Left ventricle myocardium inferior (tissue), 1 donor: ENCODE measurements at regions of chr12 and their contacts with region 1.

Region 1: DNA sequence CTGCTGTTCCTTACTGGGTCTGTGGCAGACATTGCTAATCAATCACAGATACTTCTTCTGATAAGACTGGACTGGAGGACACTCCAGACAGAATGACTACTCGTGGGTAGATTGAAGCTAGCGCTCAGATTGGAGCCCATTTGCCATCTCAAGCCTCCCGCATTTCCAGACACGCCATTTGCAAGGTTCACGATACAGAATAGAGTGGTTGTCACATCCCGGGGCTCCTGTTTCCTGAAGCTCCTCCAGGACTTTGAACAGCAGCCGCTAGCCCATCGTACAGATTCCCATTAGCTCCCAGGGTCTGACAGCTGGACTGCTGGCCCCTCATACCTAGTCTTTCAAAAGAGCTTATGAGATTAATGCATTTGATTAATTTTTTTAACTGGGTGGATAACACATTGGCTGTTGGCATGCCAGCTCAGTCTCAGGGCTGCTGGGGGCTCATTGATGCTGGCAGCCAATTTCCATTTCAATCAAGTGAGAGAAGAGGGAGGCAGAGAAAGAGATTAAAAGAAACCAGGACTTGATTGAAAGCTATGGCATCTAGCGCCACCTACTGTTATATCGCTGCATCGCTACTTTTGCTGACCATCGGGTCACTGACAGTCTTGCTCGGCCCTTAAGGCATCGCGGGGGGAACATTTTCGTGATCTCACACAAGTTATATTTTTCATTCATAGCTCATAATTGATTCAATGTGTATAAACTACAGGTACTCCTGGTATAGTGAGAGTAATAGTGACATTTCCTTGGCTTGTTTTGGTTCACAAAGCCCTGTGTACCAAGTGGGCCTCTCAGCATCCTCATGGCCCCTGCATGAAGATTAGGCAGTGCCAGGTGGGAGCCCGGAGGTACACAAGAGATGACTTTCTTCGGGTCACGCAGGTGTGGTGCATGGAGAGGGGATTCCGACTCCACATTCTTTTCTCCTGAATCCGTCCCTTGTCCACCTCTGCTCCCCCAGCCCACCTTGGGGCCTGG is 78.6 kb downstream of the CCDC60 start:
- DNase-seq: peak; percentile 50
- H3K4me3 ChIP-seq: no peak overlapping the region
- H3K27ac ChIP-seq: no peak overlapping the region
- H3K4me1 ChIP-seq: peaks cover 25% of the 10 kb centered on the region
- H3K27me3 ChIP-seq: no peaks in the 10 kb centered on the region
- CTCF ChIP-seq: peak; percentile 92

Region 2: DNA sequence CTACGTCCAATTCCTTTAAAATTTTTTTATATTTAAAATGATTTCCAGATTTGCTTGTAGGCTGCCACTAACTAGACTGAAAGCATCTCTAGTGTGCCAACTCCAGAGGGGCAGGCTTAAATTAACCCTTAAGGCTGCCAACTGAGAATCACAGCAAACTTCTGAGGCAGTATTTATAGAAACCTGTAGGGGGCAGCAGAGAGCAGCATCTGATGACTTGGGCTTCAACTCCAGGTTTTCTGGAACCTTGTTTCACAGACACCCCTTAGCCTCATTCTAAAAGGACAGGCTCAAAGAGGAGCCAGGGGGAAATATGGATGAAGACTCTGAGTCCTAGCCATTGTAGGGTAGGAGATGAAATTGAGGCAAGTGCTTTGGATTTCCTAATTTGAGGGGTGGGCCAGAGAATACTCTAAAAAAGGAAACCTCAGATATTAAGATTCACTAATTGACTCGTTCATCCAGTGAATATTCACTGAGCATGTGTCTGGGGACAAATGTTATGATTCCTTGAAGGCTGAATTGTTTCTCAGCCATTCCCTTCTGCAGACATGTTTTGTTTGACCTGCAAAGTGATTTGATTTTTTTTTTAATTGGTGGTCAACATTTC is 297.7 kb before region 1 on chr12:
- intact Hi-C with region 1: loop called (anchors 5 kb)
- DNase-seq: no peak
- H3K4me3 ChIP-seq: no peak overlapping the region
- H3K27ac ChIP-seq: no peak overlapping the region
- H3K4me1 ChIP-seq: peaks cover 4% of the 10 kb centered on the region
- H3K27me3 ChIP-seq: no peaks in the 10 kb centered on the region
- CTCF ChIP-seq: peak; percentile 94

Region 3: GRCh38 chr12:119328111-119328510 is 85.0 kb before region 1 on chr12:
- intact Hi-C with region 1: loop called (anchors 5 kb)
- DNase-seq: no peak
- H3K4me3 ChIP-seq: peak overlapping the region; percentile 15
- H3K27ac ChIP-seq: no peak overlapping the region
- H3K4me1 ChIP-seq: peaks cover 16% of the 10 kb centered on the region
- H3K27me3 ChIP-seq: peaks cover 6% of the 10 kb centered on the region
- CTCF ChIP-seq: peak; percentile 61

Region 4: DNA sequence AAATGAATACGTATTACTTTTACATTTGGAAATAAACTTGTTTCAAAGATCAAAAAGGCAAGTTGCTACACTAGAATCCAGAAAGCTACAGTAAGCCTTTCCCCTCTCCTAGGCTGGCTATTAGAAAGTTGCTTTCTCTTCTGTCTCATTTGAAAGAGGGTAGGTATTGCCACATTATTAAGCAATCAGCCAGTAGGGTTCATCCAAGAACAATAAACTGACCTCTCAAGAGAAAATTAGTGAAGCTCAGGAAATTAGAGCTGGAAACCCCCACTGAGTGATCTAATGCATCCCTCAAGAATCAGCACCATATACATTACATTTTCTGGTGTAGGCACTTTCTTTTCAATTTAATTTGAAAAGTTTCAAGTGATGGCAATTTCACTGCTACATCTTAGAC is 176.0 kb after region 1 on chr12:
- intact Hi-C with region 1: no loop called
- DNase-seq: no peak
- H3K4me3 ChIP-seq: no peak overlapping the region
- H3K27ac ChIP-seq: no peak overlapping the region
- H3K4me1 ChIP-seq: peaks cover 12% of the 10 kb centered on the region
- H3K27me3 ChIP-seq: peaks cover 62% of the 10 kb centered on the region
- CTCF ChIP-seq: no peak